Heart right ventricle (tissue), 16 donors: ENCODE measurements at regions of chr10 and their contacts with region 1.

Region 1: DNA sequence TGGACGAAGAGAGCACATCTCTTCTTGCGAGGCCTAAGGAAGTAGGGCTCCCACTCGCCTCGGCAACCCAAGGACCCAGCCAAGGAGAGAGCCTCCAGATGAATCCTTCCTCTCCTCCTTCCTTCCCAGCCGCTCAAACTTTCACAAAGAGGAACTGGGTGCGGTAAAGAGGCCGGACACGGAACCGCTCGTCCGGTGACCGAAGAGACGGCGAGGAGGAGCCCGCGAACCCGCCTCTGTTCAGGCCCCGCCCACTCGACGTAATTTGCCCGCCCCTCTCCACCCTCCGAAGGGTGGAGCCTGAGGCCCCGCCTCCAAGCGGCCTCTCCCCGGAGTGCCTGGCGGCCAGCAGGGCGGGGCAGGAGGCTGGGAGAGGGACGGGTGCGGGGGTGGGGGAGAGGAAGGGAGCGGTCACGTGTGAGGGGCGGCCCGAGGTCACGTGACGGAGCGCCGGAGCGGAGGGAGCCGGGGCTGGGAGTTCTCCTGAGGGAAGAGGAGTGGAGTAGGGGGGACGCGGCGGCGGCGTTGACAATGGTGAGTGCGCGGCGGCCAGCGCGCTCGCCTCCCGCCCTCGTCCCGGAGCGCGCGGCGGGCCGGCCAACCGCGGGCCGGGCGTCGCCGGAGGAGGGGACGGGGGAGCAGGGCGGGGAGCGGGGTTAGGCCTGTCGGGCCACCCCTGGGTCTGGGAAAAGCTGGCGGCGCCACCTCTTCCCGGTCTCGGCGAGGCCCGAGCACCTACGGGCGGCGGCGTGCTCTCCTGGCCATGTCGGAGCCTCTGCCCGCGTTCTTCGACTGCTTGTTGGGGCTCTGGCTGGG is at the start of gene VPS26A:
- DNase-seq: peak; percentile 99
- ATAC-seq: peak; percentile 98 to 100 (median 99)
- H3K4me3 ChIP-seq: peak within 1 kb of the TSS; percentile 61 to 96 (median 90)
- H3K27ac ChIP-seq: peak within 1 kb of the TSS; percentile 82 to 99 (median 94)
- H3K4me1 ChIP-seq: peaks cover 4 to 41% (median 23%) of the 10 kb centered on the region in 9 donors
- H3K27me3 ChIP-seq: no peaks in the 10 kb centered on the region
- CTCF ChIP-seq: peak in 6 of 9 donors; percentile 4 to 65 (median 50)
- total RNA-seq, gene VPS26A: 30.0 to 43.8 (median 35.2) TPM

Region 2: DNA sequence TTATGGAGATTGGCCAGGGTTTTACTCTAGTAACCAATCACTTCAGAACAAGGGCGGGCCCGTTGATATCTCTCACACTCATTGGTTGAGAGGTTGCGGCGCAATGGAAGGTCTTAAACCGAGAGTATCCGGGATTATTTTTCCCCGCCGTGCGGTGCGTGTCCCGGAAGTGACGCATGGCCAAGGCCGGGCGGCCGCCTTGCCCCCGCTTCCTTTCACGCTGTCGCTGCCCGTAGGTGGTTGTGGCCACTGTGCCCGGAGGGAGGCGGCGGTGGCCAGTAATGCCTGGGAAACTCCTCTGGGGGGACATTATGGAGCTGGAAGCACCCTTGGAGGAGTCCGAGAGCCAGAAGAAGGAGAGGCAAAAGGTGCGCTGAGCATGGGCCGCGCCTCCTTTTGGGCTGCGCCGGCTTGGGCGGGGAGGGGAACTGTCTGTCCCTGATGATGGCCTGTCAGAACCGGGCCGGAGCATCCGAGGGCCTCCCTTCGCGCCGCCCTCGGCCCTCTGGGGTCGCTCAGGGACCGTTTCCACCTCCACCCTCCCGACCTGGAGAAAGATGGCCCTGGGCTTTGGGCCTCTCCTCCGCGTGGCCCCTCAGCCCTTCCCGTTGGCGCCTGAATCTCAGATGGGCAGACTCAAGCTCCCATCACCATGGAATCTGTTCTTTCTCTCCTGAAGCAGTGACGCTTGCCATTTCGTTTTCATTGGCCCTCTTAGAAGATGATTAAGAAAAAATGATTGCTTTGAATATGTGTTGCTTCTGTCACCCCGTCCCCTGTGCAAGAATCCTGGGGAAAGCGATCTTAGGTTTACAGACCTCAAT is 222.6 kb before region 1 on chr10 and contains the start of gene DDX50:
- intact Hi-C with region 1: no loop called
- DNase-seq: peak; percentile 93 to 98
- ATAC-seq: peak; percentile 98 to 99 (median 98)
- H3K4me3 ChIP-seq: peak within 1 kb of the TSS; percentile 72 to 95 (median 86)
- H3K27ac ChIP-seq: peak within 1 kb of the TSS; percentile 88 to 100 (median 98)
- H3K4me1 ChIP-seq: peaks cover 6 to 33% (median 23%) of the 10 kb centered on the region in 9 donors
- H3K27me3 ChIP-seq: no peaks in the 10 kb centered on the region
- CTCF ChIP-seq: peak in 4 of 9 donors; percentile 13 to 36 (median 22)
- total RNA-seq, gene DDX50: 18.3 to 21.7 (median 20.4) TPM

Region 3: GRCh38 chr10:69004821-69005220 is 119.1 kb before region 1 on chr10:
- intact Hi-C with region 1: loop called in 1 of 10 experiments (anchors 10 kb)
- DNase-seq: no peak
- ATAC-seq: peak in 4 of 8 donors; percentile 45 to 68 (median 65)
- H3K4me3 ChIP-seq: no peak overlapping the region
- H3K27ac ChIP-seq: peak overlapping the region in 3 of 10 donors; percentile 17 to 57 (median 32)
- H3K4me1 ChIP-seq: peaks cover 0 to 8% (median 0%) of the 10 kb centered on the region in 9 donors
- H3K27me3 ChIP-seq: no peaks in the 10 kb centered on the region
- CTCF ChIP-seq: peak in 8 of 9 donors; percentile 34 to 72 (median 61)

Region 4: GRCh38 chr10:69061305-69062161 is 62.4 kb before region 1 on chr10:
- intact Hi-C with region 1: no loop called
- DNase-seq: peak; percentile 52 to 76
- ATAC-seq: peak; percentile 83 to 91 (median 86)
- H3K4me3 ChIP-seq: peak overlapping the region in 7 of 10 donors; percentile 4 to 35 (median 19)
- H3K27ac ChIP-seq: peak overlapping the region; percentile 84 to 95 (median 90)
- H3K4me1 ChIP-seq: peaks cover 5 to 98% (median 49%) of the 10 kb centered on the region in 9 donors
- H3K27me3 ChIP-seq: no peaks in the 10 kb centered on the region
- CTCF ChIP-seq: no peak

Region 5: GRCh38 chr10:69179743-69180524 is 56.0 kb after region 1 on chr10 and contains the start of gene SUPV3L1:
- intact Hi-C with region 1: loop called in 1 of 10 experiments (anchors 5 kb)
- DNase-seq: peak; percentile 86 to 95
- ATAC-seq: peak; percentile 96 to 99 (median 97)
- H3K4me3 ChIP-seq: peak within 1 kb of the TSS; percentile 60 to 98 (median 85)
- H3K27ac ChIP-seq: peak within 1 kb of the TSS; percentile 80 to 95 (median 92)
- H3K4me1 ChIP-seq: peaks cover 0 to 36% (median 27%) of the 10 kb centered on the region in 9 donors
- H3K27me3 ChIP-seq: no peaks in the 10 kb centered on the region
- CTCF ChIP-seq: no peak
- total RNA-seq, gene SUPV3L1: 32.9 to 49.4 (median 38.0) TPM